Stomach (tissue), 19 donors: ENCODE measurements at regions of chr14 and their contacts with region 1.

Region 1: GRCh38 chr14:35414365-35414764 is 9.8 kb upstream of the NFKBIA start:
- DNase-seq: no peak
- H3K4me3 ChIP-seq: no peak overlapping the region
- H3K27ac ChIP-seq: peak overlapping the region in 1 of 5 donors; percentile 4
- H3K4me1 ChIP-seq: peaks cover 7 to 12% (median 9%) of the 10 kb centered on the region in 4 donors
- H3K27me3 ChIP-seq: no peaks in the 10 kb centered on the region
- CTCF ChIP-seq: no peak
- EP300 ChIP-seq: no peak
- POLR2A ChIP-seq: no peak

Region 2: GRCh38 chr14:35140718-35141581 is 273.4 kb before region 1 on chr14:
- intact Hi-C with region 1: loop called (anchors 5 kb)
- DNase-seq: no peak
- H3K4me3 ChIP-seq: no peak overlapping the region
- H3K27ac ChIP-seq: no peak overlapping the region
- H3K4me1 ChIP-seq: no peaks in the 10 kb centered on the region
- H3K27me3 ChIP-seq: no peaks in the 10 kb centered on the region
- CTCF ChIP-seq: peak in 3 of 7 experiments; percentile 13 to 56 (median 15)
- EP300 ChIP-seq: no peak
- POLR2A ChIP-seq: no peak

Region 3: DNA sequence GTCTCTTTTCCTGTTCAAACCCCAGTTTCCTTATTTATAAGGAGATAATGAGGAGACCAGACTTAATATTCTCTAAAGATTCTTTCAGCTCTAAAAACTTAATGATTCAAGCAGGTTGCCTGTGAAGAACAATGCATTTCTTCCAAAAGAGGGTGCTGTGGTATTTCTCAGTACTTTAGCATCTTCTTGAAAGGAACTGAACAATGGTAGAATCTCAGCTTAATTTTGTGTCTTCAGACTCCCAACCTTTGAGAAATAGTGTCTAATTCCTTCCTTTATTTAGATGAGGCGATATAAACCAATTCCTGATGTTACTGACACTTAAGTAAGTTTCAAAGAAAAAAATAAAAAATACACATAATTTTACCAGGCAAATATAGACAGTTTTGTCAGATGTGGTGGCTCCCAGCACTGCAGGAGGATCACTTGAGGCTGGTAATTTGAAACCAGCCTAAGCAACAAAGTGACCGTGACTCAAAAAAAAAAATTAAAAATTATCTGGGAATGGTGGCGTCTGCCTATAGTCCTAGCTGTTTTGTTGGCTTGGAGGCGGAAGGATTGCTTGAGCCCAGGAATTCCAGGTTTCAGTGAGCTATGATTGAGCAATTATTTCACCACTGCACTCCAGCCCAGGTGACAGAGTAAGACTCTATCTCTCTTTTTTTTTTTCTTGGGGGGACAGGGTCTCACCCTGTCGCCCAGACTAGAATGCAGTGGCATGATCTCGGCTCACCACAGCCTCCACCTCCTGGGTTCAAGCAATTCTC is 199.1 kb before region 1 on chr14:
- intact Hi-C with region 1: loop called (anchors 5 kb)
- DNase-seq: peak in 1 of 2 donors; percentile 67
- H3K4me3 ChIP-seq: no peak overlapping the region
- H3K27ac ChIP-seq: no peak overlapping the region
- H3K4me1 ChIP-seq: peaks cover 0 to 13% (median 3%) of the 10 kb centered on the region in 4 donors
- H3K27me3 ChIP-seq: no peaks in the 10 kb centered on the region
- CTCF ChIP-seq: peak in 2 of 7 experiments; percentile 21
- EP300 ChIP-seq: no peak
- POLR2A ChIP-seq: no peak

Region 4: DNA sequence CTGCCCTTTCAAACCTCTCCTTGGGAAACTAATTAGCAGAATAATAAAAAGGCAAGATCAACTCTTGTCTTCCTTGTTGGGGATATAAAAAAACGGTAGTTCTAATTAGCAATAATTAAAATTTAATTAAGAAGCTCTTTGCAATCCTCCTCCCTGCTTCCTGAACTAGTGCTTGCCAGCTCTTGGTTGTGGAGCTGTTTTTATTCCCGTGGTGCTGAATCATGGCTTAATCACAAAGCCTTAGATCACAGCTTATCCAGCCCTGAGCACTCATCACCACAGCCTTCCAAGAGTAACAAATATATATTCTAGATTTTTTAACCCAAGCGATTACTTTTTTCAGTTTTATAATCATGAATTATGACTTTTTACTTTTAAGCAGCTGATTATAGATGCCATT is 56.4 kb after region 1 on chr14:
- intact Hi-C with region 1: no loop called
- DNase-seq: peak in 1 of 2 donors; percentile 28
- H3K4me3 ChIP-seq: no peak overlapping the region
- H3K27ac ChIP-seq: no peak overlapping the region
- H3K4me1 ChIP-seq: no peaks in the 10 kb centered on the region
- H3K27me3 ChIP-seq: peaks cover 0 to 6% (median 0%) of the 10 kb centered on the region in 3 donors
- CTCF ChIP-seq: no peak
- EP300 ChIP-seq: no peak
- POLR2A ChIP-seq: no peak

Region 5: GRCh38 chr14:35551081-35551480 is 136.7 kb after region 1 on chr14:
- intact Hi-C with region 1: no loop called
- DNase-seq: no peak
- H3K4me3 ChIP-seq: no peak overlapping the region
- H3K27ac ChIP-seq: no peak overlapping the region
- H3K4me1 ChIP-seq: no peaks in the 10 kb centered on the region
- H3K27me3 ChIP-seq: no peaks in the 10 kb centered on the region
- CTCF ChIP-seq: no peak
- EP300 ChIP-seq: no peak
- POLR2A ChIP-seq: no peak